B cell (primary cell): ENCODE measurements at regions of chr9 and their contacts with region 1.

Region 1: DNA sequence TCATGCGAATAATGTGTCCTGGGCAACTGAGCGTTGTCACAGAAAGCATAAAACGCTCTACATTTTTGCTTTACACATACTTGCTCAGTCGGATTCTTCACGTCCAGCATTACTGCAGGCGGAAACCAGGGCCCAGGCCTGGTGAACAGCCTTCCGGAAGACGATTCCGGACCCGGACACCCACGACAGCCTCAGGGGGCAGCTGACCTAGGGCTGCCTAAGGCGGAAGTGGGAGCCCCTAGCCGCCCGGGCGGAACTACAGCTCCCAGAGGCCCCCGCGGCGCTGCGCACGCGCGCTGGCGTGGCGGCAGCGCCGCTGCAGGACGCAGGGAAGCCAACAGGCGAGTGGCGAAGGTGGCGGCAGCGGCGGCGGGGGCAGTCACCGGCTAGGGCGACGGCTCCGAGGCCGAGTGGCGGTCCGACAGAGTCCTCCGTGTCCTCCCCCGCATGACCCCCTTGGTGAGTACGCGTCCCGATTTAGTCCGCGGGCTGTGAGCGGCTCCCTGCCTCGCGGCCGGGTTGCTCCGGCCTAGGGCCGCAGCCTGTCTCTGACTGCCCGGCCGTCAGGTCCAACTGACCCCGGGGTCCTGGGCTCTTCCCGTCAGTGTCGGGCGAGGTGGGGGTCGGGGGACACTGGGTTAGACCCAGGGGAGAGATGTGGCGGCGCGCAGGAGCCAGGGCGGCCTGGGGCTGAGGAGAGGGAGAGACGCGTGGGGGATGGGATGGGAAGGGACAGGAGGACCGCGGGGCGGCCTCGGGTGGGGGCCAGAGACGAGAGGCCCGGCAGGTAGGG is at the start of gene GAPVD1:
- DNase-seq: peak; percentile 98
- ATAC-seq: peak; percentile 93
- H3K4me3 ChIP-seq: peak within 1 kb of the TSS; percentile 74 to 100 (median 88)
- H3K4me3 Mint-ChIP-seq: peak within 1 kb of the TSS; percentile 99
- H3K27ac ChIP-seq: peak within 1 kb of the TSS; percentile 96 to 100
- H3K27ac Mint-ChIP-seq: peak within 1 kb of the TSS; percentile 100
- H3K4me1 ChIP-seq: peaks cover 20 to 27% of the 10 kb centered on the region in 2 donors
- H3K4me1 Mint-ChIP-seq: peaks cover 42% of the 10 kb centered on the region
- H3K27me3 ChIP-seq: no peaks in the 10 kb centered on the region
- H3K27me3 Mint-ChIP-seq: no peaks in the 10 kb centered on the region
- CTCF ChIP-seq: peak; percentile 47
- total RNA-seq, gene GAPVD1: 61.2 and 65.3 TPM in 2 replicates

Region 2: GRCh38 chr9:124861342-124862229 is 400.1 kb before region 1 on chr9 and contains the starts of genes ARPC5L and RPL35:
- CTCF ChIA-PET with region 1: no interaction called
- POLR2A ChIA-PET with region 1: interaction called, 4 read pairs
- intact Hi-C with region 1: loop called (anchors 1 kb)
- DNase-seq: peak; percentile 96
- ATAC-seq: peak; percentile 96
- H3K4me3 ChIP-seq: peak within 1 kb of the TSS; percentile 43 to 91 (median 81)
- H3K4me3 Mint-ChIP-seq: peak within 1 kb of the TSS; percentile 99
- H3K27ac ChIP-seq: peak within 1 kb of the TSS; percentile 88 to 93
- H3K27ac Mint-ChIP-seq: peak within 1 kb of the TSS; percentile 98
- H3K4me1 ChIP-seq: peaks cover 18 to 34% of the 10 kb centered on the region in 2 donors
- H3K4me1 Mint-ChIP-seq: peaks cover 28% of the 10 kb centered on the region
- H3K27me3 ChIP-seq: no peaks in the 10 kb centered on the region
- H3K27me3 Mint-ChIP-seq: no peaks in the 10 kb centered on the region
- CTCF ChIP-seq: peak; percentile 48
- total RNA-seq, gene ARPC5L: 37.3 and 41.2 TPM in 2 replicates
- total RNA-seq, gene RPL35: 1,533 and 1,609 TPM in 2 replicates

Region 3: GRCh38 chr9:125143375-125144090 is 118.2 kb before region 1 on chr9 and contains the start of gene SCAI:
- CTCF ChIA-PET with region 1: no interaction called
- POLR2A ChIA-PET with region 1: no interaction called
- intact Hi-C with region 1: loop called (anchors 1 kb)
- DNase-seq: peak; percentile 98
- ATAC-seq: peak; percentile 98
- H3K4me3 ChIP-seq: peak within 1 kb of the TSS; percentile 41 to 70 (median 60)
- H3K4me3 Mint-ChIP-seq: peak within 1 kb of the TSS; percentile 98
- H3K27ac ChIP-seq: peak within 1 kb of the TSS in 1 of 2 donors; percentile 2
- H3K27ac Mint-ChIP-seq: peak within 1 kb of the TSS; percentile 88
- H3K4me1 ChIP-seq: peaks cover 9% of the 10 kb centered on the region in 2 donors
- H3K4me1 Mint-ChIP-seq: peaks cover 19% of the 10 kb centered on the region
- H3K27me3 ChIP-seq: no peaks in the 10 kb centered on the region
- H3K27me3 Mint-ChIP-seq: no peaks in the 10 kb centered on the region
- CTCF ChIP-seq: peak; percentile 96
- total RNA-seq, gene SCAI: 19.8 and 21.4 TPM in 2 replicates

Region 4: DNA sequence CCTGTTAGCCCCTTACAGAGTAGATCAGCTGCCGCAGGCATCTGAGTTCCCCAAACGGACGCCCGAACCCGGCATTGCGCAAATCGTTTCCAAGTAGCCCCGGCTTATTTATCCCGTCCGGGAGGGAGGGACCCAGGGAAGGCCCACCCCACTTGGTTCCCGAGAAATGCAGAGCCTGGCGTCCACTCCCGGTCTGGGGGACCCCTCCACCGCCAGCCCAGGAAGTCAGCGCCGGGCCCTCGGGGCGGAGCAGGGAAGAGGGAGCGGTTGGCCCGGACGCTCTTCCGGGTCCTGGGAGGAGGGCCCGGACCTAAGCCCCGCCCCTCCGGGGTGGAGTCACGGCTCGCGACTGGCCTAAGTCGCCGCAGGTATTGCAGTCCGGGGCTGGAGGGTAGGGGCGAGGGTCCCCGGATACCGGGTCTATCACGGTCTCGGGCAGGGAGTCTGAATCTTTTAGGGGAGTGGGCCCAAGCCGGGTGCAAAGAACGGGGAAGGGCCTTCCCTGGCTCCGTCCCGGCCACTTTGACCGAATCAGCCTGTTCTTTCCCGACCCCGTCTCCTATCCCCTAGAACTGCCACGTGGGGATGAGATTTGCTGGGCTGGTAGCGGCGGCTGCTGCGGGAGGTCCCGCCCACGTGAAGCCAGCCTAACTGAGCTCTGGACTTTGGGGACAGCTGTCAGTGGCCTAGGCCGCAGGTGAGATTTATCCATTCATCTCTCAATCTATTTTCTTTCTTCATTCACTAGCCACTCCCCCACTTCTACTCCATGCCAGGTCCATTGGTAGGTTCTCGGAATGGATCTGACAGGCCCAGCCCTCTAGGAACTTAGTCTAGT is 61.3 kb before region 1 on chr9 and contains the start of gene RABEPK:
- CTCF ChIA-PET with region 1: interaction called, 4 read pairs
- POLR2A ChIA-PET with region 1: no interaction called
- intact Hi-C with region 1: loop called (anchors 1 kb)
- DNase-seq: peak; percentile 94
- ATAC-seq: peak; percentile 98
- H3K4me3 ChIP-seq: peak within 1 kb of the TSS; percentile 61 to 96 (median 83)
- H3K4me3 Mint-ChIP-seq: peak within 1 kb of the TSS; percentile 96
- H3K27ac ChIP-seq: peak within 1 kb of the TSS; percentile 79 to 93
- H3K27ac Mint-ChIP-seq: peak within 1 kb of the TSS; percentile 95
- H3K4me1 ChIP-seq: peaks cover 10 to 16% of the 10 kb centered on the region in 2 donors
- H3K4me1 Mint-ChIP-seq: peaks cover 15% of the 10 kb centered on the region
- H3K27me3 ChIP-seq: no peaks in the 10 kb centered on the region
- H3K27me3 Mint-ChIP-seq: no peaks in the 10 kb centered on the region
- CTCF ChIP-seq: no peak
- total RNA-seq, gene RABEPK: 9.0 and 11.6 TPM in 2 replicates